Stomach (tissue), 19 donors: ENCODE measurements at regions of chr19 and their contacts with region 1.

Region 1: GRCh38 chr19:21482863-21483276 is 22.5 kb upstream of the ZNF429 start:
- DNase-seq: peak; percentile 63 to 80
- H3K4me3 ChIP-seq: peak overlapping the region in 1 of 4 donors; percentile 23
- H3K27ac ChIP-seq: peak overlapping the region in 1 of 5 donors; percentile 60
- H3K4me1 ChIP-seq: no peaks in the 10 kb centered on the region
- H3K27me3 ChIP-seq: no peaks in the 10 kb centered on the region
- CTCF ChIP-seq: peak in 5 of 7 experiments; percentile 78 to 86 (median 80)
- EP300 ChIP-seq: no peak
- POLR2A ChIP-seq: no peak

Region 2: DNA sequence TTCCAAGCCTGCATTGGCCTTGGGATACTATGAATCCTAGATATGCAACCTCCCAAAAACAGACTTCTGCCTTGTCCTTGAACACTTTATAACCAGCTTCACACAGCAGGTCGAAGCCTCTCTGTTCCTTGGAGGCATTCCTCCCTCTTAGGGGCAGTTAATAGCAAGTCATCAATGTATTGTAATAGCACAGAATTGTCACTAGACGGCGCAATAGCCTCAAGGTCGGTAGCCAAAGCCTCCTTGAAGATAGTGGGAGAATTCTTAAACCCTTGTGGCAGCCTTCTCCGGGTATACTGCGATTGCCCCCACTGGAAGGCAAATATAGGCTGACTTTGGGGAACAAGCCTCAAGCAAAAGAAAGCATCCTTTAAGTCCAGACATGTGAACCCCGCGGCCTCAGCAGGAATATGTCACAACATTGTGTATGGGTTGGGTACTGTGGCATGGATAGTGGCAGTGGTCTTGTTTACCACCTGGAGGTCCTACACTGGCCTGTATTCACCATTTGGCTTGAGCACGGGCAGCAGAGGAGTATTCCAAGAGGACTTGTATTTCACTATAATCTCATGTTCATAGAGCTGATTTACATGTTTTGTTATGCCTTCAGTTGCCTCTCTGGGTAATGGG is 279.9 kb before region 1 on chr19:
- intact Hi-C with region 1: loop called (anchors 5 kb)
- DNase-seq: peak in 1 of 2 donors; percentile 80
- H3K4me3 ChIP-seq: no peak overlapping the region
- H3K27ac ChIP-seq: no peak overlapping the region
- H3K4me1 ChIP-seq: no peaks in the 10 kb centered on the region
- H3K27me3 ChIP-seq: no peaks in the 10 kb centered on the region
- CTCF ChIP-seq: peak in 5 of 7 experiments; percentile 20 to 78 (median 65)
- EP300 ChIP-seq: no peak
- POLR2A ChIP-seq: no peak

Region 3: DNA sequence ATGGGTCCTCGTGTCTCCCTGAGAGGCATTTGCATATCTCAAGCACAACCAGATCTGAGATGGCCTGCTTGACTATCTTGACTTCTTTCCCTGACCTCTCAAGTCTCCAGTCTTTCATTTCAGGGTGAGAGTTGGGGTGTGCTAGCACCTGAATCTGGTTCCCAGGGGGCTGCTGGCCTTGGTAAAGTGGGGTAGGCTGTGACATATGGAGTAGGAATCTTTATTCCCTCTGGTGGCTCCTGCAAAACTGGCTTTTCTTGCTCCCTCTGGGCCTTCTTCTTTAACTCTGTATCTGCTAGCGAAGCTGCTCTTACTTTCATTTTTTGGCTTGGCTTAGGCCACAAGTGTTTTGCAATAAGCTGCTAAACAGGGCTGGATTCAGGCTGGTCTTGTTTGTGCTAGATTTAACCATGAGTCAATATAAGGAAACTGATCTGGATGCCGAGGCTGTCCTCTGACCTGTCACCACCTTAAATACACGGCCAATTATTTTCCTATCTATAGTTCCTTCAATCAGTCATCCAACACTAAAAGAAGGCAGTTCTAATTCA is 43.6 kb before region 1 on chr19:
- intact Hi-C with region 1: no loop called
- DNase-seq: peak; percentile 58 to 62
- H3K4me3 ChIP-seq: no peak overlapping the region
- H3K27ac ChIP-seq: peak overlapping the region in 3 of 5 donors; percentile 20 to 60 (median 56)
- H3K4me1 ChIP-seq: peaks cover 0 to 30% (median 4%) of the 10 kb centered on the region in 4 donors
- H3K27me3 ChIP-seq: no peaks in the 10 kb centered on the region
- CTCF ChIP-seq: no peak
- EP300 ChIP-seq: no peak
- POLR2A ChIP-seq: no peak